ENCODE measurements at regions of chr6 and their contacts with region 1.

Region 1: GRCh38 chr6:140441256-140441655 is 1066.8 kb upstream of the CITED2 start:
- DNase-seq: peak; percentile 46
- ATAC-seq: peak; percentile 98
- H3K4me3 ChIP-seq: no peak overlapping the region
- H3K27ac ChIP-seq: no peak overlapping the region
- H3K4me1 ChIP-seq: peaks cover 5% of the 10 kb centered on the region; the same call in 1 of the 2 replicates
- H3K27me3 ChIP-seq: no peaks in the 10 kb centered on the region
- CTCF ChIP-seq: peak; percentile 86
- EP300 ChIP-seq: no peak
- POLR2A ChIP-seq: no peak
- RAD21 ChIP-seq: peak; percentile 82

Region 2: GRCh38 chr6:139219271-139219729 is 1222.0 kb before region 1 on chr6:
- CTCF ChIA-PET with region 1: no interaction called
- POLR2A ChIA-PET with region 1: no interaction called
- in situ Hi-C with region 1: no loop called
- intact Hi-C with region 1: loop called (anchors 1 kb)
- DNase-seq: peak; percentile 75
- ATAC-seq: peak; percentile 100
- H3K4me3 ChIP-seq: no peak overlapping the region
- H3K27ac ChIP-seq: no peak overlapping the region
- H3K4me1 ChIP-seq: no peaks in the 10 kb centered on the region
- H3K27me3 ChIP-seq: no peaks in the 10 kb centered on the region
- CTCF ChIP-seq: peak; percentile 97
- EP300 ChIP-seq: no peak
- POLR2A ChIP-seq: no peak
- RAD21 ChIP-seq: peak; percentile 86

Region 3: DNA sequence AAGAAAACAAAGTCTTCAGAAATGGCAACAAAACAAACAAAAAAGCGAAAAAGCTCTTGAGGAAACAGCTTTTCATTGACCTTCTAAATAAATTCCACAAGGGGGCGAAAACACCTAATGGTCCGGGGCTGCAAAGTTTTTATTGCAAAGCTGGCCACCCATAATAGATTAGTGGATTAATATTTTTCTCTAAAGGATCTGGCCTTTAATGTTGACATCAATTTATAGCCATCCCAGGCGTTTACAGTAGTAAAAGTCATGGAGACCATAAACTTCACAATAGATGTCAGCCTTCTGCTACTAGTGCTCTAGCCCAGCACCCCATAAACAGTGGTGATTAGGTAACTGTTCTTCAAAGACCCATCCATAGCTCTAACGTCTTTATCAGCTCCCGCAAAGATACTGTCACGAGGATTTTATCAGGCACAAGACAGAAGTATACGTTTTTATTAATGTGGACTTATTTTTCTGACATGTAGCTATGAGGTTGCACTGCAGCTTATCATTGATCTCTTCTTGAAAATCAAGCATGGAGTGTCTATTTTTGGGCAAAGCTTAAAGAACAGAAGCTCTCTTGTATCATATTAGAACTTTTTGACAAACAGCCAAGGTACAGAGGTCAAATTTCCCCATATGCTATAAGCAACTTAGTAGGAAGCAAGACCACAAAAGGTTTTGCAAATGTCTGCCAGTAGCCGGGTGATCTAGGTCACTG is 1071.5 kb before region 1 on chr6:
- CTCF ChIA-PET with region 1: no interaction called
- POLR2A ChIA-PET with region 1: interaction called, 4 read pairs
- in situ Hi-C with region 1: loop called (anchors 25 kb)
- intact Hi-C with region 1: loop called (anchors 1 kb)
- DNase-seq: peak; percentile 95
- ATAC-seq: peak; percentile 3
- H3K4me3 ChIP-seq: peak overlapping the region; percentile 6 to 31 (median 13); a peak in 3 of 6 replicates
- H3K27ac ChIP-seq: peak overlapping the region; percentile 59
- H3K4me1 ChIP-seq: peaks cover 46% of the 10 kb centered on the region
- H3K27me3 ChIP-seq: peaks cover 0 to 10% of the 10 kb centered on the region in 2 experiments; a peak in 1 of 5 replicates
- CTCF ChIP-seq: peak; percentile 72
- EP300 ChIP-seq: peak in 1 of 2 experiments; percentile 71; a peak in 1 of 4 replicates
- POLR2A ChIP-seq: peak in 1 of 2 experiments; percentile 48; a peak in 1 of 4 replicates
- RAD21 ChIP-seq: peak; percentile 78

Region 4: GRCh38 chr6:139881728-139882211 is 559.5 kb before region 1 on chr6:
- CTCF ChIA-PET with region 1: interaction called, 9 read pairs
- POLR2A ChIA-PET with region 1: no interaction called
- in situ Hi-C with region 1: loop called (anchors 10 kb)
- intact Hi-C with region 1: loop called (anchors 1 kb)
- DNase-seq: peak; percentile 34
- ATAC-seq: peak; percentile 88
- H3K4me3 ChIP-seq: no peak overlapping the region
- H3K27ac ChIP-seq: no peak overlapping the region
- H3K4me1 ChIP-seq: no peaks in the 10 kb centered on the region
- H3K27me3 ChIP-seq: no peaks in the 10 kb centered on the region
- CTCF ChIP-seq: peak; percentile 55
- EP300 ChIP-seq: no peak
- POLR2A ChIP-seq: no peak
- RAD21 ChIP-seq: peak; percentile 37; the same call in 1 of the 2 replicates

Region 5: GRCh38 chr6:140052756-140053729 is 388.2 kb before region 1 on chr6:
- CTCF ChIA-PET with region 1: no interaction called
- POLR2A ChIA-PET with region 1: no interaction called
- in situ Hi-C with region 1: no loop called
- intact Hi-C with region 1: loop called (anchors 1 kb)
- DNase-seq: no peak
- ATAC-seq: peak; percentile 50; the same call in 1 of the 3 replicates
- H3K4me3 ChIP-seq: no peak overlapping the region
- H3K27ac ChIP-seq: no peak overlapping the region
- H3K4me1 ChIP-seq: no peaks in the 10 kb centered on the region
- H3K27me3 ChIP-seq: no peaks in the 10 kb centered on the region
- CTCF ChIP-seq: peak; percentile 19; the same call in 1 of the 2 replicates
- EP300 ChIP-seq: no peak
- POLR2A ChIP-seq: no peak
- RAD21 ChIP-seq: no peak

Region 6: DNA sequence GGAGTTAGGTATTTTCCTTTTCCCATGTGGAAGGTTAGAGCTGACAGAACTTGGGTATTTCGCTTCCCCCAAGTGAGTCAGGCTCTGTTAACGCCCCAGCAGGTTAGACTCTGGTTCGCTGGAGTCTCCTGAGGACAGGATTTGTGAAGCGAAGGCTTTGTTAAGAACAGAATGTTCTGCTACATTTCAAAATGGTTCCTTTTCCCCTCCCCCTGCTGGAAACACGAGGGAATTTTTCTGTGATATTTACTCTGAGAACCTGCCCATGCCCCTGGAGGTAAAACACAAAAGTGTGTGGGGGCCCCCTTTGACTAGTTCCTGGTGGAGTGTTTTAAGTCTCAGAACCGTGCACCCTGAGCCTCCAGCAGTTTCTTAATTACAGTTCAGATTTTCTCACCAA is 335.4 kb before region 1 on chr6:
- CTCF ChIA-PET with region 1: no interaction called
- POLR2A ChIA-PET with region 1: no interaction called
- in situ Hi-C with region 1: no loop called
- intact Hi-C with region 1: loop called (anchors 5 kb)
- DNase-seq: peak; percentile 39
- ATAC-seq: peak; percentile 94
- H3K4me3 ChIP-seq: peak overlapping the region; percentile 11 to 38 (median 24); a peak in 2 of 6 replicates
- H3K27ac ChIP-seq: no peak overlapping the region
- H3K4me1 ChIP-seq: 0 out of 2 replicates have a peak, but pooled peaks cover 10% of the 10 kb centered on the region
- H3K27me3 ChIP-seq: no peaks in the 10 kb centered on the region
- CTCF ChIP-seq: peak; percentile 27
- EP300 ChIP-seq: no peak
- POLR2A ChIP-seq: no peak
- RAD21 ChIP-seq: no peak

Region 7: GRCh38 chr6:140414966-140415660 is 26.1 kb before region 1 on chr6:
- CTCF ChIA-PET with region 1: no interaction called
- POLR2A ChIA-PET with region 1: no interaction called
- in situ Hi-C with region 1: no loop called
- intact Hi-C with region 1: no loop called
- DNase-seq: no peak
- ATAC-seq: no peak
- H3K4me3 ChIP-seq: no peak overlapping the region
- H3K27ac ChIP-seq: no peak overlapping the region
- H3K4me1 ChIP-seq: no peaks in the 10 kb centered on the region
- H3K27me3 ChIP-seq: no peaks in the 10 kb centered on the region
- CTCF ChIP-seq: no peak
- EP300 ChIP-seq: no peak
- POLR2A ChIP-seq: no peak
- RAD21 ChIP-seq: no peak

Region 8: DNA sequence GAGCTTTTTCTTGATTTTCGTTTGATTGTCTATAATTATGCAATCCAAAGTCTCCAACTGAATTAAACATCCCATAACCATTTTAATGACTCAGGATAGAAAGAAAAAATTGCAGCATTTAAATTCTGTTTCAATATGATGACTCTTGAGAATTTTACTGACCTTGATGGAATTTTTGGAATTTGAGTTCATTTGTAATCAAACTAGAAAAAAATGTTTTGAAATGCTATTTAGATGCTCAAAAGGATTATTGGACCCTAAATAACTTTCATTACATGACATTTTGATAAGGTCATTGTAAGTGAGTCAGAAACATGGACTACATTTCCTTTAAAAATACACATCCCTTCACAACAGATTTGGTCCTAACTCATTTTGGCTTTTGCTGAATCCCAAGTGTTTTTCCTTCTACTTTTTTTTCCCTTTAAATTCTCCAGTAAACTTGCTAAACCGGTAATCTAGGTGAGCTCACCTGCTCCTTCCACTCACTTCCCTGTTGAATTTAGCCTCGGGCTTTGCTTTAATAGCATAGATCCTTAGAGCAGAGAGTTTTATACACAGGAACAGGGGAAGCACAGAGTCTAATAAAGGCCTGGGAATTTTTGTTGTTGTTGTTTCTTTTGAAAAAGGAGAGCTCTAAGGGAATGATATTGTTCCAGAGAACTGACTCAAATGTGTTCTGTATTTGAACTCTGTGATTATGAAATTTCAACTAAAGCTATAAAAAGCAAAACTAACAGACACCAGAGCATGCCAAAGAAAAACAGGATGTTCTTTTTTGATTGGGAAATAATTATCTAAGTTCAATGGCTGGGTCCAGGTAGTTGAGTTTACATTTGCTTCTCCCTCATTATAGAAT is 21.4 kb after region 1 on chr6:
- CTCF ChIA-PET with region 1: no interaction called
- POLR2A ChIA-PET with region 1: no interaction called
- in situ Hi-C with region 1: no loop called
- intact Hi-C with region 1: no loop called
- DNase-seq: no peak
- ATAC-seq: no peak
- H3K4me3 ChIP-seq: no peak overlapping the region
- H3K27ac ChIP-seq: no peak overlapping the region
- H3K4me1 ChIP-seq: no peaks in the 10 kb centered on the region
- H3K27me3 ChIP-seq: no peaks in the 10 kb centered on the region
- CTCF ChIP-seq: no peak
- EP300 ChIP-seq: no peak
- POLR2A ChIP-seq: no peak
- RAD21 ChIP-seq: no peak

Region 9: DNA sequence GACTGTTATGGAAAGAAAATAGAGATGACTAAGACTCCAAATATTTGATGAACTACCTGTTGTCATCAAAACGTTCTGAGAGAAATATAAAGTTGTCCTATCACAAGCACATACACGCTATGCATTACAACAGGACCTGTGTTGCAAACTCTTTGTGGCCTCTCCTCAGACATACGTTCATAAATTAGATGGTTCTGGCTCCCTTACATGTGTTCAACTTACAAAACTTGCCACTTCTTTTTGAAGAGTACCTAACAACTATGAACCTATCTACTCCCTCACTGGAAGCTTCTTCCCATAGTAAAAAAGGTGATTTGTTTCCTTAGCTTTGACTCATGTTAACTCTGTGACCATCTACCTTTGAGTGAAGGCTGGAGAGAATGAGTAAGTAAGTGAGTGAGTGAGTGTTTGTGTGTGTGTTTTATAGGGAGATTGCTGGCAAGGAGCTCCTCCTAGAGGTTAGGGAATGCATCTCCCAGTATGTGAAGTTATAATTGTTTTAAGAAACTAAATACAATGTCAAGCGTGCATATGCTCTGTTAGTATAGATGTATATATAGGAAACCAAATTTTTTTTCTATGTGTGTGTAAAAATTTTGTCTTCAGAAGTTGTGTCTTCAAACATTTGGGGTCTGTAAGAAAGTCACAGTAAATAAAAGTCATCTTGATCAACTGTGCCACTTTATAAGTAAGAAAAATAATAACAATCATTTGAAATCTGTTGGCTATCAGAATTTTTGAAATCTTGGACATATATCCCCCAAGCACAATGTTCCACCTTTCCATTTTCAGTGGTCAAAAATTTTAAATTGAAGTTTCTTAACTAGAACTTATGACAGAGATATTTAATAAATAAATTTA is 480.3 kb after region 1 on chr6:
- CTCF ChIA-PET with region 1: no interaction called
- POLR2A ChIA-PET with region 1: no interaction called
- in situ Hi-C with region 1: no loop called
- intact Hi-C with region 1: loop called (anchors 1 kb)
- DNase-seq: peak; percentile 61
- ATAC-seq: peak; percentile 97
- H3K4me3 ChIP-seq: no peak overlapping the region
- H3K27ac ChIP-seq: no peak overlapping the region
- H3K4me1 ChIP-seq: no peaks in the 10 kb centered on the region
- H3K27me3 ChIP-seq: no peaks in the 10 kb centered on the region
- CTCF ChIP-seq: peak; percentile 80
- EP300 ChIP-seq: no peak
- POLR2A ChIP-seq: no peak
- RAD21 ChIP-seq: peak; percentile 67

Measured in HepG2 (cell line).